ENCODE measurements at regions of chr1 and their contacts with region 1.

Region 1: GRCh38 chr1:46179138-46180081 is 3.1 kb upstream of the P3R3URF start:
- DNase-seq: peak; percentile 78
- ATAC-seq: peak; percentile 75
- H3K4me3 ChIP-seq: no peak overlapping the region; a peak in 1 of 4 replicates
- H3K27ac ChIP-seq: peak overlapping the region; percentile 40; the same call in 1 of the 2 replicates
- H3K4me1 ChIP-seq: peaks cover 59% of the 10 kb centered on the region
- H3K27me3 ChIP-seq: no peaks in the 10 kb centered on the region
- CTCF ChIP-seq: peak; percentile 92

Region 2: DNA sequence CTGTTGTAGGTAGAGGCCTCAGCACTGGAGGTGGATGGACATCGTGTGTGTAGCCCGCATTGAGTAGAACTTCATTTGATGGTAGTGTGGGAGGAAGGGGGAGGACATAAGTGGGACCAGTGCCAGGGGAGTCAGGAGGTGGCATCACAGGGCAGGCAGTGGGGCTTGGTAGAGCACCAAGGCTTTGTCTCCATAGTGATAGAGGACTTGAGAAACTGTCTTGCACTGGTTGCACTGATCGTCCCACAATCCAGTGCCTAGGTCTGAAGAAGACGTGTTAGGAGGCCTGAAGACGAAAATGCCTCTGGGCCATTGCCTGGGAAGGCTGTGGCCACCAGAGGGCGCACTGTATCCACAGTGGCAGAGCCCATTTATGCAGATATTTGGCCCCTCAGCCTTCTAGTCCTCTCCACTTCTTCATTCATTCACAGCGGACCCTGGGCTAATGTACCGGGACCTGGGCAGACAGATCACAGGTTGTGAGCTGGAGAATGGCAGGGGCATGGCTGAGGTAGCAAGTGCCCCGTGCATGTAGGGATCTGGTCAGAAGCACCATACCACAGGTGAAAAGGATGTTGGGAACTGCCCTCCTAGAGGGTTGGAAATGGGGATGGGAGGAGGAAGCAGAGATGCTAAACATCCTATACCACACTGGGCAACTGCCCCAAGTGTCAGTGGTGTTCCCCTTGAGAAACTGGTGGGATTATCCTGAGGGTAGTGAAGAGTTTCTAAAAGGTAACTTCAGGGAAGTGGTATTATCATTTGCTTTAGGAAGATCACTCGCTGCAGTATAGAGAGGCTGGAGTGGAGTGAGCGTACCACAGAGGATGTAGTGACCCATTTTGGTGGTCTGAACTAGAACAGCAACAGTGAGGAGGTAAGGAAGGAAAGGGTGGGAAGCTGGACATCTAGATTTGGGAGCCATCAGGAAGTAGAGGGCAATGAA is 142.2 kb before region 1 on chr1:
- CTCF ChIA-PET with region 1: interaction called, 3 read pairs
- POLR2A ChIA-PET with region 1: interaction called, 3 read pairs
- in situ Hi-C with region 1: no loop called
- intact Hi-C with region 1: loop called (anchors 1 kb)
- DNase-seq: peak; percentile 71
- ATAC-seq: peak; percentile 82
- H3K4me3 ChIP-seq: no peak overlapping the region
- H3K27ac ChIP-seq: peak overlapping the region; percentile 34
- H3K4me1 ChIP-seq: peaks cover 7% of the 10 kb centered on the region; the same call in 1 of the 2 replicates
- H3K27me3 ChIP-seq: no peaks in the 10 kb centered on the region
- CTCF ChIP-seq: peak; percentile 96

Measured in Panc1 (cell line).